Activated CD4-positive, alpha-beta T cell treated with anti-CD3 and anti-CD28 coated beads for 36 hours (primary cell): ENCODE measurements at regions of chr9 and their contacts with region 1.

Region 1: GRCh38 chr9:94030318-94031179 is 53.7 kb upstream of the PTPDC1 start:
- DNase-seq: peak; percentile 89
- ATAC-seq: peak; percentile 100
- H3K4me3 Mint-ChIP-seq: peak overlapping the region; percentile 98
- H3K27ac Mint-ChIP-seq: peak overlapping the region; percentile 96
- H3K4me1 Mint-ChIP-seq: peaks cover 15% of the 10 kb centered on the region
- H3K27me3 Mint-ChIP-seq: peaks cover 3% of the 10 kb centered on the region

Region 2: DNA sequence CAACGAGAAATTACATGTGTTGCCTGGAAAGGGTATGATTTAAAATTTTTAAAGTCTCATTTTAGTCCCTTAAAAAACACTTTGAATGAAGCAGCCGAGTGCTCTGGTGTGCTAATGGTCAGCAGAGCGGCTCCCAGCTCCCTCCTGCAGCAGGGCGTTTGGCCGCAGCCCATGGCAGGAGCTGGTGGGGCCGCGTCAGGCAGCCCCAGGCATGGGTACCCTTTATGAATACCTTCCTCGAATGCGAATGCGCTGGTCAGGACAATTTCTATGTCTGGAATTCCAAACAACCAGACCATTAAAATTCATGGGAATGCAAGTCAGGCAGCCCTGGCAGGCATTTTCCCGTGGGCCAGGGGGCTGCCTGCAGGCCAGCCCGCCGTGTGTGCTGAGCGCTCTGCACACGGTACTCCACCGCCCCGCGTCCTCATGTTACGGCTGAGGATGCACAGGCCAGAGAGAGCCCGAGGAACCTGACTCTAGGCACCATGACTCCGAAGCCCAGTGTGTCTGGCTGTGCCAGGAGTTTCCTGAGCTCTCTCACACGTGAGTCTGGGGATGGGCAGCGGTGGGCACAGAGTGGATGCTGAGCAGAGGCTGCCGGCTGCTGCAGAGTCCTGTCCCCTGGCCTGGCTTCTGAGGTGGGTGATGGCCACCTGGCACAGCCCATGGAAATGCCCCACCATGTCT is 722.9 kb before region 1 on chr9:
- CTCF ChIA-PET with region 1: no interaction called
- POLR2A ChIA-PET with region 1: no interaction called
- intact Hi-C with region 1: no loop called
- DNase-seq: no peak
- ATAC-seq: no peak
- H3K4me3 Mint-ChIP-seq: no peak overlapping the region
- H3K27ac Mint-ChIP-seq: no peak overlapping the region
- H3K4me1 Mint-ChIP-seq: no peaks in the 10 kb centered on the region
- H3K27me3 Mint-ChIP-seq: peaks cover under 1% of the 10 kb centered on the region

Region 3: GRCh38 chr9:93713716-93714115 is 316.8 kb before region 1 on chr9:
- CTCF ChIA-PET with region 1: no interaction called
- POLR2A ChIA-PET with region 1: no interaction called
- intact Hi-C with region 1: no loop called
- DNase-seq: no peak
- ATAC-seq: no peak
- H3K4me3 Mint-ChIP-seq: no peak overlapping the region
- H3K27ac Mint-ChIP-seq: no peak overlapping the region
- H3K4me1 Mint-ChIP-seq: no peaks in the 10 kb centered on the region
- H3K27me3 Mint-ChIP-seq: peaks cover 17% of the 10 kb centered on the region

Region 4: GRCh38 chr9:93827545-93828330 is 202.8 kb before region 1 on chr9:
- CTCF ChIA-PET with region 1: no interaction called
- POLR2A ChIA-PET with region 1: no interaction called
- intact Hi-C with region 1: no loop called
- DNase-seq: peak; percentile 67
- ATAC-seq: peak; percentile 88
- H3K4me3 Mint-ChIP-seq: no peak overlapping the region
- H3K27ac Mint-ChIP-seq: no peak overlapping the region
- H3K4me1 Mint-ChIP-seq: peaks cover 8% of the 10 kb centered on the region
- H3K27me3 Mint-ChIP-seq: peaks cover 28% of the 10 kb centered on the region

Region 5: DNA sequence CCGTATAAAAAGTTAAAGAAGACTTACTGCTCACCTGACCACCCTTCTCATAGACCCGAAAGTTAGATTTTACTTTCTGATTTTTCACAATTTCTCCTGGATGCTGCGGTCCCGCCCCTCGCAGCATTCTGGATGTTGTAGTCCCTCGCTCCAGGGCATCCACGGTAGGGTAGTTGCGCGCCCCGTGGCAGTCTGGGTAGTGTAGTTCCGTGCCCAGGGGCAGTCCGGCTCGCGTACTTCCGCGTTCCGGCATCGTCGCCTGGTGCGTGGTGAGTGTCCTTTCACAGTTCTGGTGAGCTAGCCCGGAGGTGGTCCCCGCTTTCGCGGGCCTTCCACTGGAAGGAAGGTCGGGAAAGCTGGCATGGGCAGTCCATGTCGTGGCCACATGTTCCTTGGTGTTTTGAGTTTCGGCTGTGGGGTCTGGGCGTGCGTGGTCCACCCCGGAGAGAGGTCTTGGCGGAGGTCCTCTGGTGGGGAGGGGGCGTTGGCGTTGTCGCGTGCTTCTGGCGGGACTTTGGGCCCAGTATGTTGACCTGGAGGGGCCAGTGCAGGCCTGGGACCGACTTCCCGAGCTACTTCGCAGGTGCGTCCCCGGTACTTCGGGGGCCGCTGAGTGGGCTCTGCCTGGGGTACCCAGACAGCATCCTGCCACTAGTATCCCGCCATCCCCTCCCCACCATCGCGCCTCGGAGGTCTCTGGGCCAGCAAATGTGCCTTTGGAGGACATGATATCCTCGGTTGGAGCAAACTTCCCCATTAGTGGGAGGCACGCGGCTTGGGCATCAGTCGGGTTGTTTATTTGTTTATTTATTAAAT is 228.7 kb after region 1 on chr9 and contains the start of gene ZNF169:
- CTCF ChIA-PET with region 1: no interaction called
- POLR2A ChIA-PET with region 1: no interaction called
- intact Hi-C with region 1: loop called in 1 of 2 experiments (anchors 1 kb)
- DNase-seq: peak; percentile 96
- ATAC-seq: peak; percentile 100
- H3K4me3 Mint-ChIP-seq: peak within 1 kb of the TSS; percentile 96
- H3K27ac Mint-ChIP-seq: peak within 1 kb of the TSS; percentile 98
- H3K4me1 Mint-ChIP-seq: peaks cover 28% of the 10 kb centered on the region
- H3K27me3 Mint-ChIP-seq: peaks cover 6% of the 10 kb centered on the region
- total RNA-seq, gene ZNF169: 6.4 to 6.7 TPM